Endothelial cell of umbilical vein (primary cell): ENCODE measurements at regions of chr12 and their contacts with region 1.

Region 1: DNA sequence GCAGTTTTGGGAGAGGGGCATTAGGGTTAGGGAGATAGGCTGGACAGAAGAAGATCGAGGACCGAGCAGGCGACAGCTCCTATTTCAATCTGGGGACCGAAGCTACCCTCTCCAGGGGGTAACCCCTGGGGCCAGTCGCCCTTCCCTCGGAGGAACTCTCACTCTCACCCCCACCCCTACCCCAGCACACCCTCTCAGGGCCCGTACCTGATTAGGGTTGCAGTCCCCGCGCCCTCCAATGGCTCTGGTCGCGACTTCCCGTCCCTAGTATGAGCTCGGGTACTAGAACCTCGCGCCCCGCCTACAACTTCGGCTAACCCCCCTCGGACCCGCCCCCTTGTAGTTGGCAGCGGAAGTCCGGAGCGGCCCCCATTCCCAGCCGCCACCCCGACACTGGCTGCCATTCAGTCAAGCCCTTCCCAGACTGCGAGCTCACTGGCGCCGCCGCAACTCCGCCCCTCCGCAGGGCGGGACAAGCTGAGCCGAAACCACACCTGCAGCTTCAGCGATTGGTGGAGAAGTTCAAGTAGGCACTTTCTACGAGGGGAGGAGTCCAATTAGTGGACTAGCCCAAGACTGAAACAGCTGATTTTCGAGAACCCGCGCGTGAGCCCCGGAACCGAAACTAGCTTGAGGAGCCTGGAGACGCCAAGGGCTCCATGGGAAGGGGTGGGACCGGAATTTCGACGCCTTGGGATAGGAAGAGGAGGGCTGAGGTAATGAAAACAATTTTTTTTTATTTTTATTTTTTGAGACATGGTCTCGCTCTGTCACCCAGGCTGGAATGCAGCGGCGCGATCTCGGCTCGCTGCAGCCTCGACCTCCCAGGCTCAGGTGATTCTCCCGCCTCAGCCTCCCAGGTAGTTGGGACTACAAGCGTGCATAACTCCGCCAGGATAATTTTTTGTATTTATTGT is at the start of gene STAT2:
- DNase-seq: peak; percentile 100
- H3K4me3 ChIP-seq: peak within 1 kb of the TSS; percentile 59 to 92 (median 74)
- H3K27ac ChIP-seq: peak within 1 kb of the TSS; percentile 73
- H3K4me1 ChIP-seq: peaks cover 14% of the 10 kb centered on the region
- H3K27me3 ChIP-seq: no peaks in the 10 kb centered on the region
- CTCF ChIP-seq: no peak
- POLR2A ChIP-seq: peak; percentile 80
- total RNA-seq, gene STAT2: 66.5 and 74.8 TPM in 2 replicates

Region 2: DNA sequence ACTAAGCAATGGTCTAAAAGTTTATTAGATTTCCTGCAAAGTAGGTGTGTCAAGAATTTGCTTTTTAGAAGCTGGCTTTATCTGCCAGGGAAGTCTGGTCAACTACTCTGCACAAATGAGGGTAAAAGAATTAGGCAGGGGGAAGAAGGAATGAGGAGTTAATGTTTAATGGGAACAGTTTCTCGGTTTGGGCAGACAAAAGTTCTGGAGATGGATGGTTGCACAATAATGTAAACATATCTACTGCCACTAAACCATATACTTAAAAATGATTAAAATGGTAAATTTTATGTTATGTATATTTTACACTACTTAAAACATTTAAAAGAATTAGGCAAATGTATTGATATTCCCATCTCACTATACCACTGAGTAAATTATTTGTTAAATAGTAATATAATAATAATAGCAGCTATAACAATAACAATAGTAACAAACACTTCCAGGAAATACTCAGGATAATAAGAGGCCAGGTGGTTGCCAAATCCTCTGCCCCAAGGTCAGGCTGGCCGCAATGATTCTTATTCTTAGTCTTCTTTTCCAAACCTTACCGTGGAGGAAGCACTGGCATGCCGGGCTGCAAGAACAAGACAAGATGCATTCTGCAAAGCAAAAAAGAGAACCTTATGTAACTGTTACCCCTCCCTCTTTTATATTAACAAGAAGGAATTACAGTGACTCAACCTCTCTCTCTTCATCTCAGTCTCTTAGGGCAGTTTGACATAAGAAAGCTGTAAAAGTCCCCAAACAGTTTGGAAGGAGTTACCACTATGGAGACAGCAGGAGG is 73.9 kb before region 1 on chr12:
- CTCF ChIA-PET with region 1: no interaction called
- POLR2A ChIA-PET with region 1: no interaction called
- dilution Hi-C with region 1: no loop called
- intact Hi-C with region 1: no loop called
- DNase-seq: peak; percentile 27
- H3K4me3 ChIP-seq: no peak overlapping the region
- H3K27ac ChIP-seq: no peak overlapping the region
- H3K4me1 ChIP-seq: peaks cover 8% of the 10 kb centered on the region
- H3K27me3 ChIP-seq: no peaks in the 10 kb centered on the region
- CTCF ChIP-seq: no peak
- POLR2A ChIP-seq: no peak

Region 3: GRCh38 chr12:56333679-56334489 is 26.2 kb before region 1 on chr12 and contains the start of gene PAN2:
- CTCF ChIA-PET with region 1: interaction called, 5 read pairs
- POLR2A ChIA-PET with region 1: interaction called, 4 read pairs
- dilution Hi-C with region 1: no loop called
- intact Hi-C with region 1: loop called (anchors 1 kb)
- DNase-seq: peak; percentile 97
- H3K4me3 ChIP-seq: peak within 1 kb of the TSS; percentile 45 to 70 (median 49)
- H3K27ac ChIP-seq: peak within 1 kb of the TSS; percentile 97
- H3K4me1 ChIP-seq: peaks cover 16% of the 10 kb centered on the region
- H3K27me3 ChIP-seq: no peaks in the 10 kb centered on the region
- CTCF ChIP-seq: peak; percentile 65 to 66
- POLR2A ChIP-seq: peak; percentile 76
- total RNA-seq, gene PAN2: 21.5 and 24.4 TPM in 2 replicates

Region 4: GRCh38 chr12:56448860-56449621 is 88.9 kb after region 1 on chr12 and contains the start of gene TIMELESS:
- CTCF ChIA-PET with region 1: interaction called, 5 read pairs
- POLR2A ChIA-PET with region 1: no interaction called
- dilution Hi-C with region 1: no loop called
- intact Hi-C with region 1: loop called (anchors 5 kb)
- DNase-seq: peak; percentile 94
- H3K4me3 ChIP-seq: peak within 1 kb of the TSS; percentile 53 to 88 (median 77)
- H3K27ac ChIP-seq: peak within 1 kb of the TSS; percentile 61
- H3K4me1 ChIP-seq: peaks cover 20% of the 10 kb centered on the region
- H3K27me3 ChIP-seq: peaks cover 0 to 3% of the 10 kb centered on the region in 2 experiments
- CTCF ChIP-seq: no peak
- POLR2A ChIP-seq: peak; percentile 84
- total RNA-seq, gene TIMELESS: 28.2 and 28.4 TPM in 2 replicates

Region 5: GRCh38 chr12:56521590-56522371 is 161.7 kb after region 1 on chr12 and contains the start of gene RBMS2:
- CTCF ChIA-PET with region 1: no interaction called
- POLR2A ChIA-PET with region 1: no interaction called
- dilution Hi-C with region 1: no loop called
- intact Hi-C with region 1: no loop called
- DNase-seq: peak; percentile 94
- H3K4me3 ChIP-seq: peak within 1 kb of the TSS; percentile 61 to 98 (median 95)
- H3K27ac ChIP-seq: peak within 1 kb of the TSS; percentile 87
- H3K4me1 ChIP-seq: peaks cover 57% of the 10 kb centered on the region
- H3K27me3 ChIP-seq: no peaks in the 10 kb centered on the region
- CTCF ChIP-seq: no peak
- POLR2A ChIP-seq: no peak
- total RNA-seq, gene RBMS2: 95.4 and 103 TPM in 2 replicates

Region 6: GRCh38 chr12:56657416-56658379 is 297.6 kb after region 1 on chr12:
- CTCF ChIA-PET with region 1: no interaction called
- POLR2A ChIA-PET with region 1: no interaction called
- dilution Hi-C with region 1: no loop called
- intact Hi-C with region 1: no loop called
- DNase-seq: no peak
- H3K4me3 ChIP-seq: no peak overlapping the region
- H3K27ac ChIP-seq: no peak overlapping the region
- H3K4me1 ChIP-seq: no peaks in the 10 kb centered on the region
- H3K27me3 ChIP-seq: no peaks in the 10 kb centered on the region
- CTCF ChIP-seq: no peak
- POLR2A ChIP-seq: no peak